Activated CD4-positive, alpha-beta T cell treated with anti-CD3 and anti-CD28 coated beads, Interleukin-2, amount 10 ng/mL, durations not matched to agents 24 days and 14 days (primary cell): ENCODE measurements at regions of chr19 and their contacts with region 1.

Region 1: GRCh38 chr19:13150187-13150930 is at the starts of genes IER2 and STX10:
- DNase-seq: peak; percentile 98
- H3K4me3 Mint-ChIP-seq: peak within 1 kb of the TSS; percentile 100
- H3K27ac Mint-ChIP-seq: peak within 1 kb of the TSS; percentile 100
- H3K4me1 Mint-ChIP-seq: peaks cover 30% of the 10 kb centered on the region
- H3K27me3 Mint-ChIP-seq: peaks cover 2% of the 10 kb centered on the region
- total RNA-seq, gene IER2: 161 TPM in 2 replicates
- total RNA-seq, gene STX10: 66.2 and 73.5 TPM in 2 replicates

Region 2: GRCh38 chr19:13012690-13013608 is 137.4 kb before region 1 on chr19:
- intact Hi-C with region 1: no loop called
- DNase-seq: peak; percentile 76
- H3K4me3 Mint-ChIP-seq: peak overlapping the region; percentile 76
- H3K27ac Mint-ChIP-seq: peak overlapping the region; percentile 67
- H3K4me1 Mint-ChIP-seq: peaks cover 15% of the 10 kb centered on the region
- H3K27me3 Mint-ChIP-seq: peaks cover 75% of the 10 kb centered on the region

Region 3: GRCh38 chr19:13104360-13104847 is 46.0 kb before region 1 on chr19:
- intact Hi-C with region 1: loop called (anchors 5 kb)
- DNase-seq: peak; percentile 92
- H3K4me3 Mint-ChIP-seq: peak overlapping the region; percentile 87
- H3K27ac Mint-ChIP-seq: peak overlapping the region; percentile 85
- H3K4me1 Mint-ChIP-seq: peaks cover 30% of the 10 kb centered on the region
- H3K27me3 Mint-ChIP-seq: peaks cover 1% of the 10 kb centered on the region

Region 4: DNA sequence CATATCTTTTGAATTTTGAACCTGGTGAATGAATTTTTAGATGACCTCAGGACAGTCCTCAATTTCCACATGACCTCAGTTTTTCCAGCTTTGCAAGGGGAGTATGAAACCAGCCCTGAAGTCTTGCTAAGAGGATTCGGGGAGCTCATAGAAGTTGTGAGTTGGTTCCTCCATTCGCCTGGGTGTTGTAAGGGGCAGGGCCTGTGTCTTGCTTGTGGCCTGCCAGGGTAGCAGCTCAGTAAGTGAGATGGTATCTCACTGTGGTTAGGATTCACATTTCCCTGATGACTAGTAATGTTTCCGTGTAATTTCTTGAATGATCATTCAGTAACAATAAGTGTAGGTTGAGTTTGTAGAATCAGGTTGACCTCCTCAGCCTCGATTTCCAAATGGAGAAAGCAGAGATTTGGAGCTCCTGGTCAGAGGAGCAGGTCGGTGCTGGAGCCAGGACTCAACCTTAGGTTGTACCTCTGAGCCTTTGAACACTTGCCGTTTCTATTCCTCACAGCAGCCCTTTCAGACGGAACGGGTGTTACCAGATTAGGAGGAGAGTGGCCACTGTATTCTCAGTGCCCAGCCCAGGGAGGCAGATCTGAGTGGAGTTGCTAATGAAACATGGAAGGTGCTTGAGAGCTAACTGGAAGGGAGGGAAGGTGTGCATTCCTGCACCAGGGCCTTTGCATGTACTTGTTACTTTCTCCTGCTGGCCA is 17.7 kb before region 1 on chr19:
- intact Hi-C with region 1: loop called (anchors 1 kb)
- DNase-seq: peak; percentile 85
- H3K4me3 Mint-ChIP-seq: peak overlapping the region; percentile 85
- H3K27ac Mint-ChIP-seq: peak overlapping the region; percentile 98
- H3K4me1 Mint-ChIP-seq: peaks cover 38% of the 10 kb centered on the region
- H3K27me3 Mint-ChIP-seq: no peaks in the 10 kb centered on the region

Region 5: DNA sequence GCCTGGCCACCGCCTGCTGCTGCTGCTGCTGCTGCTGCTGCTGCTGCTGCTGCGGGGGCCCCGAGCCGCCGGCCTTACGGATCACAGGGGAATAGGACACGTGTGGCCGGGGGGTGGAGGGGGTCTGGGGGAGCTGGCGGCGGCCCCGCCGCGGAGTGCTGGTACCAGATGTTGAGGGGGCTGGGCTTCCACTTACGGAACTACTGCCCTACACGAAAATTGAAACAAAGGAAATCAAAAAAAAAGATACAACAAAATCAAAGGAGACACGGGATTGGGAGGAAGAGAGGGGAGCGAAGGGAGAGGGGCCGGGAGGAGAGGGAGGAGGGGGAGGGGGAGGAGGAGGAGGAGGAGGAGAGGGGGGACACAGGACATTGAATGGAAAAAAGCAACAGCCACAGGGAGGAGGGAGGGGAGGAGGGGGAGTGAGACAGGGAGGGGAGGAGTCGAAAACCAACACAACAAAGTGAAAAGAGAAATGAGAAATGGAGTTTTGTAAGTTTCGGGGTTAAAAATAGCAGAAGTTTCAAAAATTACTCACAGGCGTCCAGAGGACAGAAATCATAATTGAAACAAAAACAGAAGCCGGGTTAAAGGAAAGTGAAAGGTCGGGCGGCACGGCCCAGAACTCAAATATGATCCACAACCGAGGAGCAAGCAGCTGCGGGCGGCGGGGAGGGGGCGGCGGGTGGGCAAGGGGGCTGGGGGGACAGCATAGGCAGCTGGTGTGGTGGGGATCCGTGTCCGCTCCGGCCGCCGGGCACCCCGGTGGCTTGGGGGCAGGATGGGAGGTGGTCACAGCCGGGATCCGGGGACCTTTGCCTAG is 57.7 kb after region 1 on chr19:
- intact Hi-C with region 1: loop called (anchors 1 kb)
- DNase-seq: peak; percentile 87
- H3K4me3 Mint-ChIP-seq: peak overlapping the region; percentile 81
- H3K27ac Mint-ChIP-seq: peak overlapping the region; percentile 94
- H3K4me1 Mint-ChIP-seq: peaks cover 13% of the 10 kb centered on the region
- H3K27me3 Mint-ChIP-seq: no peaks in the 10 kb centered on the region

Region 6: GRCh38 chr19:14081325-14082093 is 931.1 kb after region 1 on chr19:
- intact Hi-C with region 1: loop called (anchors 2 kb)
- DNase-seq: peak; percentile 100
- H3K4me3 Mint-ChIP-seq: peak overlapping the region; percentile 96
- H3K27ac Mint-ChIP-seq: peak overlapping the region; percentile 93
- H3K4me1 Mint-ChIP-seq: peaks cover 19% of the 10 kb centered on the region
- H3K27me3 Mint-ChIP-seq: no peaks in the 10 kb centered on the region